Mucosa of descending colon (tissue), 3 donors: ENCODE measurements at regions of chr2 and their contacts with region 1.

Region 1: GRCh38 chr2:155377266-155377680 is 678.8 kb downstream of the KCNJ3 start:
- DNase-seq: no peak
- ATAC-seq: no peak
- H3K4me3 ChIP-seq: no peak overlapping the region
- H3K4me1 ChIP-seq: no peaks in the 10 kb centered on the region
- CTCF ChIP-seq: no peak

Region 2: DNA sequence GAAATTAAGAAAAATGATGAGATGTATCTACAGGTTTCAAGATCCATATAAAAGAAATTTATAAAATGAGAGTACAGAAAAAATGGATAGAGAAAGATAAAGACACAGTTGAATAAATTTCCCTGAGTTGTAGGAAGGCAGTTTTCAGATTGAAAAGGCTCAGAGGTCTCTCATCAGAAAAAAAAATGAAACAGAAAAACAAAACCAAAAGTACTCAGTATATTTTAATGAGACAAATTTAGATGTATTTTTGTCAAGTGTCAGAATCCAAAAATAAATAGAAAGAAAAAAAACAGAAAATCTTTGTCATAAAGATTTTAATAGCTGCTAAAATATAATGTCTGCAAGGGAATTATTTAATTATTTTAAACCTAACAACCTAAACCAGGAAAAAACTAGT is 158.3 kb before region 1 on chr2:
- intact Hi-C with region 1: no loop called
- DNase-seq: no peak
- ATAC-seq: no peak
- H3K4me3 ChIP-seq: no peak overlapping the region
- H3K4me1 ChIP-seq: no peaks in the 10 kb centered on the region
- CTCF ChIP-seq: no peak

Region 3: DNA sequence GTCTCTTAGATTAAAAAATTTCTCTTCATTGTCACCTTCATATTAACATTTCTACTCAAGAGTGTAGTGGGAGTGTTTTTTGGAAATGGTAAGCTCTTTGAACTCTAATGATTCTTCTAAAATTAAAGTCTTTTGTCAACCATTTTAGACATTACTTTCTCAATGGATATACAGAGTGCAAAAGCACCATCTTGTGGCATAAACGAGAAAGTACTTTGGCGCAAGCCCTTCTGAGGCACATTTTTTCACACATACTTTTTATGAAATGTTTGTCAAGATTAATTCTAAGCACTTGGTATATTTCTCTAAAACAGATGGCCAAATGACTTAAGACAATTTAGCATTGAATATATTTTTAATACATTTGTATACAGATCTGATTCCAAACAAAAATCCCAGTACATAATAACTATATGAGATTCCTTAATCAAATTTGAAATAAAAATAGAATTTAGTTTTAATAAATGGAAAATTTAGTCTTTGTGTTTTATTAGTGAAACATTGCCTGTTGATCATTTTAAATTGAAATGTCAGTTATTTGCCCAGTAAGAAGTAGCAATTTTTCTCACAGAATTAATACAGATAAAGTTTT is 1816.9 kb after region 1 on chr2:
- intact Hi-C with region 1: loop called in 1 of 2 experiments (anchors 10 kb)
- DNase-seq: peak in 1 of 3 donors; percentile 49
- ATAC-seq: peak; percentile 68
- H3K4me3 ChIP-seq: no peak overlapping the region
- H3K4me1 ChIP-seq: no peaks in the 10 kb centered on the region
- CTCF ChIP-seq: peak; percentile 27